HEK293 (cell line): ENCODE measurements at regions of chr19 and their contacts with region 1.

Region 1: DNA sequence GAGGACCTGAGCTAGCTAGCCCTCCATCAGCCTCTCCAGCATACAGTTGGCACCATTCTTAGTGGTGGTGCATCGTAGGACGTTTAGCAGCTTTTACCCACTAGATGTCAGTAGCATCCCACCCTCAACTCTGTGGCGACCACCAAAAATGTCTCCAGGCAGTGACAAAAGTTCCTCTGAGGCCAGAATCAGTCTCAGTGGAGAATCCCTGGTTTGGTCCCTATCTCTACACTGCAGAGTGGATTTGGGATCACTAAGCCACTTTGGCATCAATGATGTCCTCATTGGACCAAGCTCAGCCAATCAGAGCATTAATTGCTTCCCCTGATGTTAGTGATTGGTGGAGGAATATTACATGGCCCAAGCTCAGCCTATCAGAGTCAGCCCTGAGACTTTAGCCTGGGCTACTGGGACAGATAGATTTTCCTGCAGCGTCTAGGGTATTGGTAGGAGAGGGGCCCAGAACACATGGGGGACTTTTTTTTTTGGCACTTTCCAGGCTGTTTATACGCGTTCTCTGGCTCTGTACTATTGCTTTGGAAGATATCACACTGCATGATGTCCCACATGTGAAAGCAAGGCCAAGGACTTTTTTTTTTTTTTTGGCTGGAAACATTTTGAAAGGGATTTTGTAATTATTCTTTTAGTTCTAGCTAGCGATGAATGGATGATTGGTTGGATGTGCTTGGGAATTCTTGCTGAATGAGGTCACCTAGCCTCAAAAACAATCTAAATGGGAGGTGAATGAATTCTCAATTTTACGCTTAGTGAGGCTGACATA is 7.0 kb downstream of the TMEM221 start:
- H3K4me3 ChIP-seq: no peak overlapping the region
- H3K27ac ChIP-seq: no peak overlapping the region
- H3K4me1 ChIP-seq: no peaks in the 10 kb centered on the region
- CTCF ChIP-seq: peak; percentile 83

Region 2: GRCh38 chr19:17424743-17425365 is 16.6 kb before region 1 on chr19:
- CTCF ChIA-PET with region 1: interaction called, 10 read pairs
- POLR2A ChIA-PET with region 1: no interaction called
- H3K4me3 ChIP-seq: no peak overlapping the region
- H3K27ac ChIP-seq: no peak overlapping the region
- H3K4me1 ChIP-seq: peaks cover 2% of the 10 kb centered on the region; the same call in 1 of the 2 replicates
- CTCF ChIP-seq: peak; percentile 83

Region 3: DNA sequence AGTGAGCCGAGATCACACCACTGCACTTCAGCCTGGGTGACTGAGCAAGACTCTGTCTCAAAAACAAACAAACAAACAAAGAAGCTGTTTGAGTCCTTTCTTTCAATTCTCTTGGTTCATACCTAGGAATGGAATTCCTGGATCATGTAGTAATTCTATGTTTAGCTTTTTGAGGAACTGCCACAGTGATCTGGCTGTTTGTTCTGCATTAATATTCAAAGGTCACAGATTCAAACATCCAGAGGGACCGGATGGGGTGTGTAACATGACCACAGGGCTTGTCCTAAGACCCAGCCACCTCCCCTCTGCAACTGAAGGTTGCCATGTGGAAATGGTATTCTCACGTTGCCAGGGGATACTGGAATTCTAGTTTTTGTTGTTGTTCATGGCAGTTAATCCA is 124.2 kb after region 1 on chr19:
- CTCF ChIA-PET with region 1: no interaction called
- POLR2A ChIA-PET with region 1: no interaction called
- H3K4me3 ChIP-seq: no peak overlapping the region
- H3K27ac ChIP-seq: no peak overlapping the region
- H3K4me1 ChIP-seq: no peaks in the 10 kb centered on the region
- CTCF ChIP-seq: no peak

Region 4: GRCh38 chr19:17641181-17641580 is 199.8 kb after region 1 on chr19:
- CTCF ChIA-PET with region 1: no interaction called
- POLR2A ChIA-PET with region 1: no interaction called
- H3K4me3 ChIP-seq: no peak overlapping the region
- H3K27ac ChIP-seq: no peak overlapping the region
- H3K4me1 ChIP-seq: no peaks in the 10 kb centered on the region
- CTCF ChIP-seq: no peak